Activated CD4-positive, alpha-beta T cell treated with anti-CD3 and anti-CD28 coated beads, Interleukin-2, amount 10 ng/mL, durations not matched to agents 24 days and 14 days (primary cell): ENCODE measurements at regions of chr16 and their contacts with region 1.

Region 1: DNA sequence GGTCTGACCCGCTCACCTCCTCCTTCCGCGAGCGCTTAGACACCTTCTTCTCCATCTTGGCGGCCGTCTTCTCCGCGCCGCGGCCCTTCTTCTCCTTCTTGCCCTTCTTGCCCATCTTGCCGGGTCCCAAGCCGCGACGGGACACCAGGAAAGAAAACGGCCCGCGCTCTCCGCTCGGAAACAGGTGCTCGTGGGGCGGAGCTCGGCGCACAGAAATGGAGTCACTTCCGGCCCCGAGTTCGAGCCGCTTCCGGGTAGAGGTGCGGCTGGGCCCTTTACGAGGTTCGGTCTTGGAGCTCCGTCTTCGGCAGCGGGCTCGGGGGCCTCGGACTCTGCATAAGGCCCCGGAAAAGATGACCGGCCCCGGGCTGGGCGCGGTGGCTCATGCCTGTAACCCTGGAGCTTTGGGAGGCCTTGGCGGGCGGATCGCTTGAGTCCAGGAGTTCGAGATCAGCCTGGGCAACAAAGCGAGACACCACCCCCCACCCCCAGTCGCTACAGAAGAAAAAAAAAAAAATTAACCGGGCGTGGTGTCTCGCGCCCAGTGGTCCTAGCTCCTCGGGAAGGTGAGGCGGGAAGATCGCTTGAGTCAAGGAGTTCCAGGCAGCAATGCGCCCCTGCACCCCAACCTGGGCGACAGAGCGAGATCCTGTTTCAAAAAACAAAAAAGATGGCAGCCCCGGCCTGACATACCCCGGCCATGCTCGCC is at the start of gene KLHDC4:
- DNase-seq: peak; percentile 97
- H3K4me3 Mint-ChIP-seq: peak within 1 kb of the TSS; percentile 98
- H3K27ac Mint-ChIP-seq: peak within 1 kb of the TSS; percentile 96
- H3K4me1 Mint-ChIP-seq: peaks cover 32% of the 10 kb centered on the region
- H3K27me3 Mint-ChIP-seq: no peaks in the 10 kb centered on the region
- total RNA-seq, gene KLHDC4: 76.1 and 91.0 TPM in 2 replicates

Region 2: DNA sequence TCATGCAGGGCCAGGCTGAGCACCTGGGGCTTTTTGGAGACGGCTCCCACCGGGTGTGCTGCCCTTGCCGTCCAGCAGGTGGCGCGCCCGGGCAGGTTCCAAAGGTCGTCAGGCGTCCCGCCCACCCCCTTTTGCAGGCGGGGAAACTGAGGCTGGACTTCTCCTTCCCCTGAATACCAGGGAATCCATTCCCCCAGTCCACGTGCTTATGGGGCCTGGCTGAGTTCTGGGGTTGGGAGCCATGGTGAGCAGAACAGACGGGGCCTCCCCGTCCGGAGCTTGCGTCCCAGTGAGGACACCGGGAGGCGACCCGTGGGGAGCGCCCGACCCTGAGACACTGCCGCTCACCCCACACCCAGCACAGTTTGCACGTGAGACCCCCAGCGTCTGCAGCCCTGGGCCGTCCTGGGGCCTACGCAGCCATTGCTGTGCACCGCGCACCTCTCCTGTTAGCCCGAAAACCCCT is 215.4 kb before region 1 on chr16:
- intact Hi-C with region 1: loop called (anchors 5 kb)
- DNase-seq: peak; percentile 88
- H3K4me3 Mint-ChIP-seq: no peak overlapping the region
- H3K27ac Mint-ChIP-seq: no peak overlapping the region
- H3K4me1 Mint-ChIP-seq: no peaks in the 10 kb centered on the region
- H3K27me3 Mint-ChIP-seq: peaks cover 2% of the 10 kb centered on the region